ENCODE measurements at regions of chr7 and their contacts with region 1.

Region 1: GRCh38 chr7:68619526-68619925 is 978.7 kb upstream of the AUTS2 start:
- DNase-seq: no peak
- ATAC-seq: no peak
- H3K4me3 ChIP-seq: no peak overlapping the region
- H3K27ac ChIP-seq: no peak overlapping the region
- H3K4me1 ChIP-seq: no peaks in the 10 kb centered on the region
- H3K27me3 ChIP-seq: no peaks in the 10 kb centered on the region
- CTCF ChIP-seq: no peak

Region 2: DNA sequence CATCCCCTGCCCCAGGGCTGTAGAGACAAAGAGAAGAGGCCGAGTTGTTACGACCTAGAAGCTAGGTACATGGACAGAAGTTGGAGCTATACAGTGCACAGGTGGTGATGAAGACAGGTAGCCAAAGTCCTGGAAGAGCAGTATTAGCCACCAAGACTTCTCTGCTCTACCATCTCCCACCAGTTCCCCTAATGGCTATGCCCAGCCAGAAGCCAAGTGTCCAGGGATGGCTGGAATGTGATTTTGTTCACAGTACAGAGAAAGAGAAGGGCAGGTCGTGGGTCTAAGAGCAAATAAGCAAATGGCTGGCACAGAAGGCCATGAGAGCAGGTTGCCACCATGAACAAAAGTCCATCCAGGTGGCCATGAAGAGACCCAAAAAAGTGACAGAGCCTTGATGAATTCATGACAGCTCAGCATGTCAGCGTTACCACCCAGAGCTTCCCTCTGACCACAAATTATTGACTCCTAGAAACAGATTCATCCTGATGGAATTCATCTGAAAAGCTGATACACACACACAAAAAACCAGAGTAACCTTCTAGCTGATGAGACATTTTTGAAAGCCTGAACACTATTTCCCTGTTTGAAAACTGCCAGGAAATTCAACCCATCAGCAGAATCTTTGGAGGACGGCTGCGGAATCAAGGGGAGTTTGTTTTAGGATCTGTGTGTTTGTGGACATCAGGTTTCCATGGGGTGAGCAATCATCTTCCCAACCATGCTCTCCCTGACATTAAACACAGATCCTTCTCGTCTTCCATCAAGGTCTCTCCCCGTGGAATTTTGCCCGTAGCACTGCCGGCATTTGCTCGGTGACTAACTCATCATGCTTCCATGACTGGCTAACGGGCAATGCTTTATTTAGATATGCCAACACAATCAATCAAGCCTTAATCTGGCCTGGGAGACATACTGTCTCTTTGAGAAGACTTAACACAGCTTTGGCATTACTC is 72.0 kb after region 1 on chr7:
- intact Hi-C with region 1: no loop called
- DNase-seq: no peak
- ATAC-seq: no peak
- H3K4me3 ChIP-seq: no peak overlapping the region
- H3K27ac ChIP-seq: no peak overlapping the region
- H3K4me1 ChIP-seq: no peaks in the 10 kb centered on the region
- H3K27me3 ChIP-seq: no peaks in the 10 kb centered on the region
- CTCF ChIP-seq: no peak

Region 3: GRCh38 chr7:68929781-68930261 is 310.3 kb after region 1 on chr7:
- intact Hi-C with region 1: loop called in 1 of 3 experiments (anchors 5 kb)
- DNase-seq: no peak
- ATAC-seq: peak in 1 of 4 donors; percentile 56
- H3K4me3 ChIP-seq: no peak overlapping the region
- H3K27ac ChIP-seq: no peak overlapping the region
- H3K4me1 ChIP-seq: no peaks in the 10 kb centered on the region
- H3K27me3 ChIP-seq: no peaks in the 10 kb centered on the region
- CTCF ChIP-seq: no peak